Activated B cell treated with CpG ODN at 0.5 μM for 24 hours (primary cell): ENCODE measurements at regions of chr1 and their contacts with region 1.

Region 1: DNA sequence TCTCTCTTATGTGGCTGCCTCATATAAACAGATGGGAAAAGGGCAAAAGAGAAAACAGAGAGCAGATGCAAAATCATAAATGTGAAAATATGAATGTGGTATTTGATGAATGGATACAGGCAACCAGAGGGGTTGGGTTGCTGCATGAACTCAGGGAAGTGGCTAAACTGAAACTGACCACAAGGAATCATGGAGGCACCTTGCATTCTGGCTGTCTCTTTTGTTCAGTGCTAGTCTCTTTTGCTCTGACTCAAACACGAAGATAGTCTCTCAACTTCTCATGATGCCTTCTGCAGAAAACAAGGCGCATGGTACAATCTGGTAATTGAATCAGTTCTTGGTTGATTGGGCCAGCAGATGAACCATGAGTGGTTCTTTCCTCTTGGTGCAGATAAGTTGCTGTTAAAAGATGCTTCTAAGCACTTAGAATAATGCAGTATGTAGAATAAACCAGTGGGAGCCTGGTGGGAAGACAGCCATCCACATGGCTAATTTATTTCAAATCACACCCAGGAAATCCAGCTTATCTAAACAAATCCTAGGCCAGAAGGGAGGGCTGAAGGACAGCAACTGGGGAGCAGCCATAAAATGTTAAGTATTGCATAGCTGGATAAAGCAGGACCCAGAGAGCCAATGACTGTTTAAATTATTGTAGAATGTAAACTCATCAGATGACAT is 64.2 kb downstream of the HLX start:
- DNase-seq: no peak
- ATAC-seq: no peak
- H3K4me3 Mint-ChIP-seq: no peak overlapping the region
- H3K27ac Mint-ChIP-seq: no peak overlapping the region
- H3K4me1 Mint-ChIP-seq: peaks cover 8% of the 10 kb centered on the region
- H3K27me3 Mint-ChIP-seq: peaks cover 2% of the 10 kb centered on the region
- CTCF ChIP-seq: no peak

Region 2: DNA sequence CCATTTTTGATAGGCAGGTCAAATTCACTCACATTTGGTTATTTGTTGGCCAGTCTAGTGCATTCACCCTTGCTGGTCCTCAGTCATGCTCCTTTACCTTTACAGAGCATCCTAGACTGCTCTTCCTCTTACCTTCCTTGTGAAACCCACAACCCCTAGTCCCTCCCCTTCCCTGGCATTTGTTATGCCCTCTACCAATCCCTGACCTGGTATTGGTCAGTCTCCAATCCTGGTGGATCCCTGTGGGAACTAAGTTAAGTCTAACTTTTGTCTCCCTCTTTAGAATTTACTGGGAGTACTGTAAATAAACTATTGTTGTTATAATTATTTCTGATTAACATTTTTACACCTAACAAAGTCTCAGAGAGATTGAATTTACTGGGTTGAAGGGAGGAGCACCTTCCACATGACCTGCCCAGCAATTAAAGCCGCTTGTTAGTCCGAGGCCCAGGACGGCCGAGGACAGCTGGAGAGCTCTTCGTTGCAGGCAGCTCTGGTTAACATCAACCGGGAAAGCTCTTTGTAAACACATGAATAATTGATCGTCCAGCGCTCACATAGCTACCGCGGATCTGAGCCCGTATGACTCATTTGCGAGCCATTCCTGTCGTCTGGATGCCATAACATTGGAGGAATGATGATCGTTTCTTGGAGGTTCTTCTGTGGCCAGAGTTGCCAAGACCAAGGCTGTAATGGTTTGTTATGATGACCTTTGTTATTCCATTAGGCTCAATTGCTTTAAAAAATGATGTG is 124.9 kb before region 1 on chr1:
- CTCF ChIA-PET with region 1: no interaction called
- POLR2A ChIA-PET with region 1: no interaction called
- intact Hi-C with region 1: no loop called
- DNase-seq: no peak
- ATAC-seq: no peak
- H3K4me3 Mint-ChIP-seq: no peak overlapping the region
- H3K27ac Mint-ChIP-seq: no peak overlapping the region
- H3K4me1 Mint-ChIP-seq: no peaks in the 10 kb centered on the region
- H3K27me3 Mint-ChIP-seq: peaks cover 8% of the 10 kb centered on the region
- CTCF ChIP-seq: no peak

Region 3: DNA sequence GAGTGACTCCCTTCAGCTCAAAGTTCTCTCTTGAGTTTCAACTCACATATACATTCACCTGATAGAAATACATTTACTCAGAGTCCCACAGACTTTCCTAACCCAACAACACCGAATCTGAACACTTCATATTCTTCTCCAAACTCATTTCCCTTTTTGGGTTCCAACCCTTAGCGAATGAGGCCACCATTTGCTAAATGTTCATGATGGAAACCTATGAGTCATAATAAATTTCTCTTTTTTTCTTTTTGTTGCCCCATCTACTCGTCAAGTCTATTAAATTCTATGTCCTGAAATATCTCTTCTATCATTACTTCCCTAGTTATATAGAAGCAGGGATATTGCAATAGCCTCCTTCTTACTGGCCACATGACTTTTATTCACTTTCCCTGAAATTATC is 35.9 kb after region 1 on chr1:
- CTCF ChIA-PET with region 1: no interaction called
- POLR2A ChIA-PET with region 1: no interaction called
- intact Hi-C with region 1: loop called (anchors 5 kb)
- DNase-seq: no peak
- ATAC-seq: no peak
- H3K4me3 Mint-ChIP-seq: no peak overlapping the region
- H3K27ac Mint-ChIP-seq: no peak overlapping the region
- H3K4me1 Mint-ChIP-seq: no peaks in the 10 kb centered on the region
- H3K27me3 Mint-ChIP-seq: no peaks in the 10 kb centered on the region
- CTCF ChIP-seq: no peak

Region 4: DNA sequence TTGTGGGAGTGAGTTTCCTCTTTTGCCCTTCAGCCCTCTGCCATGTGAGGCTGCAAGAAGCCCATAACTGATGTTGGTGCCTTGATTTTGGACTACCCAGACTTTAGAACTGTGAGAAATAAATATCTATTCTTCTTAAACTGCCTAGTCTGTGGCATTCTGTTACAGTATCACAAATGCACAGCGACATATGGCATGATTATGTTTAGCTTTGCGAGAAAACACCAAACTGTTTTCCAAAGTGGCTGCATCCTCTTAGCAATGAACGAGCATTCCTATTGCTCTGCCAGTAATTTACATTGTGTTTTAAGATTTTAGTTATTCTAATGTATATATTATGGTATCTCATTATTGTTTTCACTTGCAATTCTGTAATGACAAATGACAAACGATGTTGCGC is 182.5 kb after region 1 on chr1:
- CTCF ChIA-PET with region 1: no interaction called
- POLR2A ChIA-PET with region 1: no interaction called
- intact Hi-C with region 1: no loop called
- DNase-seq: no peak
- ATAC-seq: no peak
- H3K4me3 Mint-ChIP-seq: no peak overlapping the region
- H3K27ac Mint-ChIP-seq: no peak overlapping the region
- H3K4me1 Mint-ChIP-seq: no peaks in the 10 kb centered on the region
- H3K27me3 Mint-ChIP-seq: no peaks in the 10 kb centered on the region
- CTCF ChIP-seq: no peak